Right lobe of liver (tissue), 6 donors: ENCODE measurements at regions of chr7 and their contacts with region 1.

Region 1: GRCh38 chr7:139016931-139017511 is 18.8 kb downstream of the ZC3HAV1L start:
- DNase-seq: peak; percentile 52 to 68 (median 60)
- ATAC-seq: peak; percentile 94 to 98 (median 98)
- H3K4me3 ChIP-seq: no peak overlapping the region
- H3K27ac ChIP-seq: no peak overlapping the region
- H3K4me1 ChIP-seq: no peaks in the 10 kb centered on the region
- H3K27me3 ChIP-seq: no peaks in the 10 kb centered on the region
- CTCF ChIP-seq: peak; percentile 53 to 71 (median 64)
- POLR2A ChIP-seq: no peak

Region 2: GRCh38 chr7:139068544-139069399 is 51.8 kb after region 1 on chr7:
- intact Hi-C with region 1: loop called (anchors 10 kb)
- DNase-seq: no peak
- ATAC-seq: peak; percentile 3 to 34 (median 25)
- H3K4me3 ChIP-seq: no peak overlapping the region
- H3K27ac ChIP-seq: no peak overlapping the region
- H3K4me1 ChIP-seq: peaks cover 0 to 26% (median 9%) of the 10 kb centered on the region in 4 donors
- H3K27me3 ChIP-seq: no peaks in the 10 kb centered on the region
- CTCF ChIP-seq: peak in 1 of 4 donors; percentile 2
- POLR2A ChIP-seq: no peak

Region 3: DNA sequence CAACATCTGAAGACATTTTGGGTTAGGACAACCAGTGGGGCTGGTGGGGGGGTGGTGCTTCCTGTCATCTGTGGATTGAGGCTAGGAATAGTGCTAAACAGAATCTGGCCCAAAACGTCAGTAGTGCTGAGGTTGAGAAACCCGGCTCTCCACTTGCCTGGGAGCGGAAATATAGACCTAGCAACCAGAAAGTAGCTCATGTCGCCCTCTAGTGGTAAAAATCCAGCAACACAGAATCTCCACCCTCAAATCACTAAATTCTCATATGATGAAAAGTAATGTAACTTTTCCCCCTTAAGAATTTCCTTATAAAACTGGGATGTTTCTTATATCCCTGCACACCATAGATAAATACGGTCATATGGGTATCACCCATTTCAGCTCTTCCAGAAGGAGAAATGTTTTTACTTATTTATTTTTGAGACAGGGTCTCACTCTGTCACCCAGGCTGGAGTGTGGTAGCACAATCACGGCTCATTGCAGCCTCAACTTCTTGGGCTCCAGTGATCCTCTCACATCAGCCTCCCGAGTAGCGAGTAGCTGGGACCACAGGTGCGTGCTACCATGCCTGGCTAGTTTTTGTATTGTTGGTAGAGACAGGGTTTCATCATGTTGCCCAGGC is 58.1 kb after region 1 on chr7:
- intact Hi-C with region 1: loop called in 1 of 2 experiments (anchors 10 kb)
- DNase-seq: peak in 2 of 3 donors; percentile 40 to 76
- ATAC-seq: peak; percentile 85 to 95 (median 93)
- H3K4me3 ChIP-seq: no peak overlapping the region
- H3K27ac ChIP-seq: peak overlapping the region in 2 of 3 donors; percentile 37 to 51
- H3K4me1 ChIP-seq: peaks cover 0 to 25% (median 6%) of the 10 kb centered on the region in 4 donors
- H3K27me3 ChIP-seq: no peaks in the 10 kb centered on the region
- CTCF ChIP-seq: peak; percentile 86 to 89 (median 88)
- POLR2A ChIP-seq: no peak